ENCODE measurements at regions of chr6 and their contacts with region 1.

Region 1: DNA sequence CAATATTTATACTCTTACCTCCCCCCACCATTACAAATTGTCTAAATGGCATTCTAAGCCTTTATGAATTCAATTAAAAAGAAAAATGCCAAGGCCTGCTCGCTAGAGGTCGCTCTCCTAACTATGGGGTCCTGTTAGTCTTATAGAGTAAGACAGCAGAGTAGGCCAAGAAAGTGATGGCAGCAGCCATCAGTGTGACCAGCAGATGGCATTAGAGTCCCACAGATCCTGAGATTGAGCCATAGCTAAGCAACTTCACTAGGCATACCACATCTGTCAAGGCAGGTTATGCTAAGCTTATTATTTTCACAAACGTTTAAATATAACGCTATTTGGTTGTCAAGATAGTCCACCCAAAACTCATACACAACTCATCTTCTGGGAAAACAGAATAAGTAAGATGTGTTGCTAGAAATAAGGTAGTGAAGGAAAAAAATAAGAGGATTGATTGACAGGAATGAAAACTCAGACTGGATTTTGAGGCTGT is 57.6 kb upstream of the SCAF8 start:
- DNase-seq: peak; percentile 92
- ATAC-seq: peak; percentile 100
- H3K4me3 Mint-ChIP-seq: no peak overlapping the region
- H3K27ac Mint-ChIP-seq: no peak overlapping the region
- H3K4me1 Mint-ChIP-seq: no peaks in the 10 kb centered on the region
- H3K27me3 Mint-ChIP-seq: peaks cover 4% of the 10 kb centered on the region

Region 2: GRCh38 chr6:153767127-153767526 is 908.5 kb before region 1 on chr6:
- CTCF ChIA-PET with region 1: no interaction called
- POLR2A ChIA-PET with region 1: no interaction called
- DNase-seq: no peak
- ATAC-seq: no peak
- H3K4me3 Mint-ChIP-seq: no peak overlapping the region
- H3K27ac Mint-ChIP-seq: no peak overlapping the region
- H3K4me1 Mint-ChIP-seq: no peaks in the 10 kb centered on the region
- H3K27me3 Mint-ChIP-seq: no peaks in the 10 kb centered on the region

Region 3: GRCh38 chr6:154629127-154629526 is 46.5 kb before region 1 on chr6:
- CTCF ChIA-PET with region 1: no interaction called
- POLR2A ChIA-PET with region 1: no interaction called
- DNase-seq: no peak
- ATAC-seq: no peak
- H3K4me3 Mint-ChIP-seq: no peak overlapping the region
- H3K27ac Mint-ChIP-seq: no peak overlapping the region
- H3K4me1 Mint-ChIP-seq: no peaks in the 10 kb centered on the region
- H3K27me3 Mint-ChIP-seq: peaks cover 2% of the 10 kb centered on the region

Region 4: GRCh38 chr6:154649721-154650120 is 25.9 kb before region 1 on chr6:
- CTCF ChIA-PET with region 1: no interaction called
- POLR2A ChIA-PET with region 1: no interaction called
- DNase-seq: no peak
- ATAC-seq: no peak
- H3K4me3 Mint-ChIP-seq: no peak overlapping the region
- H3K27ac Mint-ChIP-seq: no peak overlapping the region
- H3K4me1 Mint-ChIP-seq: no peaks in the 10 kb centered on the region
- H3K27me3 Mint-ChIP-seq: peaks cover 3% of the 10 kb centered on the region

Region 5: DNA sequence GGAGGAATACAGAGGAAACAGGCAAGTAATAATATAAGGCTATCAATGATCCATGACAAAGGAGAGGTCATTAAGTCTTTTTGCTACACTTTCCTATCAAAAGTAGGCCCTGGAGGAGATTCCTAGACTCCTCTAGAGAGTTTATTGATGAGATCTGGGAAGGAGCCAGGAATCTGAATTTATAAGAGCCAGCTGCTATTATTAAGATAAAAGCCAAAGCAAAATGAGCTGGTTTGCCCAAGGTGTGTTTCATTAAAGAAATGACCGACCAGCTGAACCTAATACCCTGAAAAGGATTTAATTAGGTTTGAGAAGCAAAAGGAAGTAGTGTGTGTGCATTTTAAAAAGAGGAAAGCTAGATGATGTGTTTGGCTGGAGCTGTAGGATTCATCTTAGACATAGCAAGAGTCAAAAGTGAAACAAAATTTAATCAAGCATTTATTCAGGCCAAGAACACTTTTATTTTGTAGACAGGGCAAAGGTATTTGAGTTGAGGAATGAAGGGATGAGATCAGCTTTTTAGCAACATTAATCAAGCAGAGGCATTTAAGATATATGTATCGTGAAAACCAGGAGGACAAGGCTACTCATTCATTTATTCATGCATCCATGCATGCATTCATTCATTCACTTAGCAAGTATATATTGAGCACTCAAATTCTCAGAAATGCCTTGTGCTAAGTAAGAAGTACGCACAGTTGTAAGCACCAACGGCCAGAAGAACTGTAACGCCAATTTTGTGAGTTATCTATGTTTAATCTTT is 14.0 kb after region 1 on chr6:
- CTCF ChIA-PET with region 1: interaction called, 28 read pairs
- POLR2A ChIA-PET with region 1: no interaction called
- DNase-seq: no peak
- ATAC-seq: no peak
- H3K4me3 Mint-ChIP-seq: no peak overlapping the region
- H3K27ac Mint-ChIP-seq: no peak overlapping the region
- H3K4me1 Mint-ChIP-seq: no peaks in the 10 kb centered on the region
- H3K27me3 Mint-ChIP-seq: no peaks in the 10 kb centered on the region

Region 6: DNA sequence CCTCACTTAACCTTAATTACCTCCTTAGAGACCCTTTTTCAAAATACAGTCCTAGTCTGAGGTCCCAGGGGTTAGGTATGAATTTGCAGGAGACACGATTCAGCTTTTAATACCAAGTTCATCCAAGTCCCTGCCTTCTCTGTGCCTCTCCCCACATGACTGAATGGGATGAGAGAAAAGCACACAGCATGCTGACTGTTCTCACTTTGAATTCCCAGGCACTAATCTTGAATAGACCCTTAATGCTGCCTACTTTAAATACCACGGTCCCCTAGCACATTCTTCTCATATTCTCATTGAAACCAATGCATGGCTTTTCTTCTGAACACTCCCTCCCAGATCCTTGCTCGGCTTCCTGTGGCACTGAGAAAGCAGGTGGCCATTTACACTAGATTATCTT is 27.4 kb after region 1 on chr6:
- CTCF ChIA-PET with region 1: interaction called, 10 read pairs
- POLR2A ChIA-PET with region 1: no interaction called
- DNase-seq: no peak
- ATAC-seq: no peak
- H3K4me3 Mint-ChIP-seq: no peak overlapping the region
- H3K27ac Mint-ChIP-seq: no peak overlapping the region
- H3K4me1 Mint-ChIP-seq: no peaks in the 10 kb centered on the region
- H3K27me3 Mint-ChIP-seq: peaks cover 9% of the 10 kb centered on the region

Region 7: GRCh38 chr6:154805288-154805911 is 129.8 kb after region 1 on chr6:
- CTCF ChIA-PET with region 1: interaction called, 166 read pairs
- POLR2A ChIA-PET with region 1: no interaction called
- DNase-seq: no peak
- ATAC-seq: no peak
- H3K4me3 Mint-ChIP-seq: no peak overlapping the region
- H3K27ac Mint-ChIP-seq: no peak overlapping the region
- H3K4me1 Mint-ChIP-seq: no peaks in the 10 kb centered on the region
- H3K27me3 Mint-ChIP-seq: no peaks in the 10 kb centered on the region

Region 8: DNA sequence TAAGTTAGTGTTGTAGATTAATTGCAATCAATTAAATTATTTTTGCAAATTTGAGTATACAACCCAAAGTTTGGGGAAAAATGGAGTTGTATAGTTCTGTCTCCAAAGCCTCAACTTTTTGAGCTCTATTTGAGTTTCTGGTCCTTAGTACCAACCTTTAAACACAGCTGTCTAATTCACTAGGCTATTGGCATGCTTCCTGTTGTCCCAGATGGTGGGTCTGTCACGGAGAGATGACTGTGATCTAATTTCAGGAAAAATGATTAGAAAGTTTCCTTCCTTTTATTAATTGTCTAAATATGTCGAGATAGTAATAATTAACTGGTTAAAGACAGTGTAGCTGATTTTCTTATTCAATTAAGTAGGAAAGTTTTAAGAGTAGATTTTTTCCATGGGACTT is 167.2 kb after region 1 on chr6:
- CTCF ChIA-PET with region 1: interaction called, 11 read pairs
- POLR2A ChIA-PET with region 1: no interaction called
- DNase-seq: no peak
- ATAC-seq: no peak
- H3K4me3 Mint-ChIP-seq: no peak overlapping the region
- H3K27ac Mint-ChIP-seq: no peak overlapping the region
- H3K4me1 Mint-ChIP-seq: no peaks in the 10 kb centered on the region
- H3K27me3 Mint-ChIP-seq: no peaks in the 10 kb centered on the region

Region 9: DNA sequence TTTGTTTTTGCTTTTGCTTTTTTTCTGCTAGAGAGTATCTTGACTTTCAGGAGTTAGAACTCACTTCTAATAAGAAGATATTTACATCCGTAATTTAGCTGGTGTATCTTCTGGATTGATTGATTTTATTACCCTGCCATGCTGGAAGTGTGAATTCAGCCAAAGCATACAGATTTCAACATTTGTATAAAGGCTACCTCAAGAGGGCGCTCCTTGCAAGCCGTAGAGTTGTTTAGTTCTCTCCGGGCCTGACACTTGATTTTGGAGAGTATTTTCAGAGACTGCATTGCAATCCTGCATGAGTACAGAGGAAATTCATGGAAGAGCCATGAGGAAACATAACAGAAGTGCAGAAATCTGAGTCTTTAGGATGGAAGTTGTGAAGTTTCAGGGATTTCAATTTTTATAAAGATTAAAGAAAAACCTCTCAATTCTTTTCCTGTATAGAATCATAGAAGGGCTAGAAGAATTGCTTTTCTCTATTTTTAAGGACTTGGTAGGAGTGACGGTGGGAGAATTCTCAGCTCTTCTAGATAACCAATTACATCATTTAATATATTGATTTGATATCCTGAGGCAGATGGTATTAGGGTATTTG is 252.8 kb after region 1 on chr6:
- CTCF ChIA-PET with region 1: interaction called, 12 read pairs
- POLR2A ChIA-PET with region 1: no interaction called
- DNase-seq: peak; percentile 80
- ATAC-seq: peak; percentile 77
- H3K4me3 Mint-ChIP-seq: no peak overlapping the region
- H3K27ac Mint-ChIP-seq: no peak overlapping the region
- H3K4me1 Mint-ChIP-seq: peaks cover 6% of the 10 kb centered on the region
- H3K27me3 Mint-ChIP-seq: no peaks in the 10 kb centered on the region

Measured in activated CD8-positive, alpha-beta T cell treated with anti-CD3 and anti-CD28 coated beads, Interleukin-2, amount 10 ng/mL, durations not matched to agents 7 days and 5 days (primary cell).